MCF 10A (cell line): ENCODE measurements at regions of chr3 and their contacts with region 1.

Region 1: GRCh38 chr3:56573501-56573900 is 16.5 kb downstream of the CCDC66 start:
- DNase-seq: no peak
- H3K4me3 Mint-ChIP-seq: no peak overlapping the region
- H3K27ac Mint-ChIP-seq: no peak overlapping the region
- H3K4me1 Mint-ChIP-seq: no peaks in the 10 kb centered on the region
- H3K27me3 Mint-ChIP-seq: no peaks in the 10 kb centered on the region
- CTCF ChIP-seq: no peak

Region 2: DNA sequence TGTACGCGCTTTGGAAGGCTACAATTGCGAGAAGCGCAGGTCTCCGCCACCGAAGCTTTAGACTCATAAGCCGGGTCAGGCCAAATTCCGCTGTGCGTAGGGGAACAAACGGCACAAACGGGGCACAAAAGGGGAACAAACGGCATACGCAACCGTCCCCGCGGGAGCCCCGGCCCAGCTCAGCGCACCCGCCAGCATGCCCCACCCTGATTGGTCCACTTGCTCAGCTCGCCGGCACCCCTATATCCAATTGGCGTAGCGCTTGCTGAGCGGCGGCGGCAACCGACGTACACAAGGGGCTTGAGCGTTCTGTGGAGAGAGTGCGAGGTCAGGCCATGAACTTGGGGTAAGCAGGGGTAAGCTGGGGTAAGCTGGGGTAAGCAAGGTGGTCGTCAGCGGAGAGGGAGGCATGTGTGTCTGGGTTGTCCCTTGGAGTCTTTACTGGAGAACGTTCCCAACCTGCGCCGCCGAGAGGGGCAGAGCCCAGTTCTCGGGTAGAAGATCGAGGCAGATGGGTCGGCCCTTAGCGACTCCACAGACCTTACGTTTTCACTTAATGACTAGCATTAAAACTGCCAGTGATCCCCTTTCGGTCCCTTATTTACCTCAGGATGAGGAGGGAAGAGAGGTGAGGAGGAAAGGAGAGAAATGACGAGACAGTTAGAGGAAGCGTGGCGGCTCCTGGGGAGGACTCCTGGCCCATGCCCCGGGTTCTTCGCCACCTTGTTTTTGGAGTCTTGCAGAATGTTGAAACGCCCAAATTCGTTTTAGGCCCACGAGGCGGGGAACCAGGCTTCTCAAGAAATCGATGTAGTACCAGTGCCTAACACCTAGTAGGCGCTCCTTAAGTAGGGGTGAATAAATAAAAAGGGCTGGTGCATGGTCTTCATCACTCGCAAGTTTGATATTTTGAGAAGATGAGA is 16.3 kb before region 1 on chr3 and contains the start of gene CCDC66:
- CTCF ChIA-PET with region 1: no interaction called
- POLR2A ChIA-PET with region 1: interaction called, 14 read pairs
- intact Hi-C with region 1: no loop called
- DNase-seq: peak; percentile 92
- H3K4me3 Mint-ChIP-seq: peak within 1 kb of the TSS; percentile 100
- H3K27ac Mint-ChIP-seq: peak within 1 kb of the TSS; percentile 97
- H3K4me1 Mint-ChIP-seq: peaks cover 13% of the 10 kb centered on the region
- H3K27me3 Mint-ChIP-seq: peaks cover 43% of the 10 kb centered on the region
- CTCF ChIP-seq: peak; percentile 64
- total RNA-seq, gene CCDC66: 28.6 and 34.5 TPM in 2 replicates